CD8-positive, alpha-beta T cell (primary cell): ENCODE measurements at regions of chr7 and their contacts with region 1.

Region 1: GRCh38 chr7:30412810-30413504 is 65.6 kb downstream of the NOD1 start:
- DNase-seq: peak in 3 of 9 experiments; percentile 13 to 62 (median 51)
- ATAC-seq: no peak
- H3K4me3 ChIP-seq: no peak overlapping the region
- H3K4me3 Mint-ChIP-seq: no peak overlapping the region
- H3K27ac ChIP-seq: no peak overlapping the region
- H3K27ac Mint-ChIP-seq: no peak overlapping the region
- H3K4me1 ChIP-seq: no peaks in the 10 kb centered on the region
- H3K4me1 Mint-ChIP-seq: no peaks in the 10 kb centered on the region
- H3K27me3 ChIP-seq: no peaks in the 10 kb centered on the region
- H3K27me3 Mint-ChIP-seq: no peaks in the 10 kb centered on the region
- CTCF ChIP-seq: no peak

Region 2: GRCh38 chr7:30164567-30164966 is 248.4 kb before region 1 on chr7:
- CTCF ChIA-PET with region 1: no interaction called
- POLR2A ChIA-PET with region 1: no interaction called
- intact Hi-C with region 1: loop called in 1 of 2 experiments (anchors 2 kb)
- DNase-seq: peak in 2 of 9 experiments; percentile 40 to 53
- ATAC-seq: no peak
- H3K4me3 ChIP-seq: no peak overlapping the region
- H3K4me3 Mint-ChIP-seq: no peak overlapping the region
- H3K27ac ChIP-seq: no peak overlapping the region
- H3K27ac Mint-ChIP-seq: no peak overlapping the region
- H3K4me1 ChIP-seq: peaks cover 25% of the 10 kb centered on the region
- H3K4me1 Mint-ChIP-seq: peaks cover 32% of the 10 kb centered on the region
- H3K27me3 ChIP-seq: no peaks in the 10 kb centered on the region
- H3K27me3 Mint-ChIP-seq: no peaks in the 10 kb centered on the region
- CTCF ChIP-seq: peak; percentile 15